Adrenal gland (tissue), 19 donors: ENCODE measurements at regions of chr17 and their contacts with region 1.

Region 1: GRCh38 chr17:73196500-73196899 is 3.6 kb downstream of the COG1 start:
- DNase-seq: peak in 4 of 7 donors; percentile 35 to 80 (median 43)
- H3K4me3 ChIP-seq: no peak overlapping the region
- H3K27ac ChIP-seq: peak overlapping the region in 1 of 5 donors; percentile 10
- H3K4me1 ChIP-seq: peaks cover 11 to 34% of the 10 kb centered on the region in 2 donors
- H3K27me3 ChIP-seq: no peaks in the 10 kb centered on the region
- CTCF ChIP-seq: peak in 3 of 6 experiments; percentile 35 to 38 (median 37)
- POLR2A ChIP-seq: no peak

Region 2: DNA sequence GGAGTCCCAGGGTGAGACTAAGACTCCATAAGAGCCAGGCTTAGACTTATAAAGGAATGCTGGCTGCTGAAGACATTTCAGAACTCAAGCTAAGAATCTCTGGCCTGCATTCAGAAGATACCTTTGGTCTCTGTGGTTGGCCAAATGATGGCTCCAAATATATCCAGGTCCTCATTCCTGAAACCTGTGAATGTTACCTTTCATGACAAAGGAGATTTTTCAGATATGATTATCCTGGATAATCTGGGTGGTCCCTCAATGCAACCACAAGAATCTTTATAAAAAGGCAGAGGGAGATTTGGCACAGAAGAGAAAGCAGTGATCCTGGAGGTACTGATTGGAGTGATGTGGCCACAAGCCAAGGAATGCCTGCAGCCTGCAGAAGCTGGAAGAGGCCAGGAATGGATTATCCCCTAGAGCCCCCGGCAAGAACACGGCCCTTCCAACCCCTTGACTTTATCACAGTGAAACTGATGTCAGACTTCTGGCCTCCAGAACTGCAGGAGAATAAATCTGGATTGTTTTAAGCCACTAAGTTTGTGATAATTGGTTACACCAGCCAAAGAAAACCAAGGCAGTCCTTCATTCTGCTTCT is 357.3 kb before region 1 on chr17:
- intact Hi-C with region 1: no loop called
- DNase-seq: no peak
- H3K4me3 ChIP-seq: no peak overlapping the region
- H3K27ac ChIP-seq: no peak overlapping the region
- H3K4me1 ChIP-seq: no peaks in the 10 kb centered on the region
- H3K27me3 ChIP-seq: no peaks in the 10 kb centered on the region
- CTCF ChIP-seq: no peak
- POLR2A ChIP-seq: no peak

Region 3: GRCh38 chr17:73231841-73232586 is 35.5 kb after region 1 on chr17:
- intact Hi-C with region 1: loop called in 1 of 2 experiments (anchors 5 kb)
- DNase-seq: peak; percentile 94 to 96 (median 95)
- H3K4me3 ChIP-seq: peak overlapping the region; percentile 39 to 96 (median 96)
- H3K27ac ChIP-seq: peak overlapping the region in 4 of 5 donors; percentile 46 to 85 (median 69)
- H3K4me1 ChIP-seq: peaks cover 15 to 49% of the 10 kb centered on the region in 2 donors
- H3K27me3 ChIP-seq: no peaks in the 10 kb centered on the region
- CTCF ChIP-seq: peak; percentile 34 to 55 (median 46)
- POLR2A ChIP-seq: peak in 1 of 2 donors; percentile 79